Gastrocnemius medialis (tissue), 4 donors: ENCODE measurements at regions of chr3 and their contacts with region 1.

Region 1: DNA sequence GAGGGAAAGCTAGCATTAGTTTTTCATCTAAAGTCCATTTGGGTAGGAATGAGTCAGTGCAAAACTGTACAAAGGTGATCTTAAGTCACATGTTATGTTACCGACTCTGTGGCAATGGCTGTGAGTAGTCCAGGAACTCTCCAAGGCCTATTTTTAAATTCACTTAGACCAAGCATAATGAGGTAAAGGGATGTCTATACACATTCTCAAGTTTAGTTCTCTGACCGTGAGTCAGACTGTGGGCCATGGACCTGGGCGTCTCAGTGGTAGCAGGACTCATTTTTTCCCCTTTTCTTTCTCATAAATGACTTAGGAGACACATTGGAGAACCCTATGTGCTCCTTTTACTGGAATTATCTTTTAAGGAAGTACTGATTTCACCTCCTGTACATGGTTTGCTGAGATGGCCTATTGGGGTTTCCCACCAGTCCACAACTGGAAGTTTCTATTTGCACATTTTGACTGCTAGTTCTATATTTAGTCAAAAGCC is 488.7 kb upstream of the TPRG1 start:
- DNase-seq: peak; percentile 61 to 73
- ATAC-seq: peak; percentile 99 to 100
- H3K4me3 ChIP-seq: no peak overlapping the region
- H3K27ac ChIP-seq: peak overlapping the region; percentile 73 to 90 (median 78)
- H3K4me1 ChIP-seq: peaks cover 40 to 44% of the 10 kb centered on the region in 2 donors
- H3K27me3 ChIP-seq: no peaks in the 10 kb centered on the region
- CTCF ChIP-seq: no peak
- POLR2A ChIP-seq: peak; percentile 32 to 73

Region 2: DNA sequence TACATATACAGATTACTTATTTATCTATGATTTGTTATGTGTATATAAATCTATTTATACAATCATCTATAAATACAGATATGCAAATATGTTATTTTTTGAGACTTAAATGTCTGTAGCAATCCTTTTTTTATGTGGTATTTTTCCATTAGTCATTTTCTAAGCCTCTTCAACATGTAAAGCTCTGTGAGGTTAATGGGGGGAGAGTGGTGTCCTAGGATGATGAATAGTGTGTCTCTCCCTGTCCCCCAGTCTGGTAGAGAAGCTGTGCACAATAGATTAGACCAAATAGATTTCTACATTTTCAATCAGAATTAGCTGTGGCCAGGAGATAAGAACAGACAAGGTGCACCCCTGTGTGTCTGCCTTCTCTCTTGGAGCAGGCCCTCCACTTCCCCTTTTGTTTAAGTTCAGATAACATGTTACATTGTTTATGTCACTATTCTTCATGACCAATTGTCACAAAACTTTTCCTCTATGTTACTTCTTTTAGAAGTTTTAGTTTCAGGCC is 75.2 kb before region 1 on chr3:
- in situ Hi-C with region 1: no loop called
- intact Hi-C with region 1: loop called (anchors 5 kb)
- DNase-seq: no peak
- ATAC-seq: no peak
- H3K4me3 ChIP-seq: no peak overlapping the region
- H3K27ac ChIP-seq: peak overlapping the region in 3 of 4 donors; percentile 2 to 84 (median 13)
- H3K4me1 ChIP-seq: peaks cover 24 to 37% of the 10 kb centered on the region in 2 donors
- H3K27me3 ChIP-seq: no peaks in the 10 kb centered on the region
- CTCF ChIP-seq: no peak
- POLR2A ChIP-seq: no peak

Region 3: GRCh38 chr3:188819939-188820338 is 136.9 kb after region 1 on chr3:
- in situ Hi-C with region 1: no loop called
- intact Hi-C with region 1: loop called (anchors 5 kb)
- DNase-seq: no peak
- ATAC-seq: peak; percentile 73 to 81
- H3K4me3 ChIP-seq: no peak overlapping the region
- H3K27ac ChIP-seq: no peak overlapping the region
- H3K4me1 ChIP-seq: peaks cover 4 to 10% of the 10 kb centered on the region in 2 donors
- H3K27me3 ChIP-seq: no peaks in the 10 kb centered on the region
- CTCF ChIP-seq: no peak
- POLR2A ChIP-seq: no peak